ENCODE measurements at regions of chr10 and their contacts with region 1.

Region 1: DNA sequence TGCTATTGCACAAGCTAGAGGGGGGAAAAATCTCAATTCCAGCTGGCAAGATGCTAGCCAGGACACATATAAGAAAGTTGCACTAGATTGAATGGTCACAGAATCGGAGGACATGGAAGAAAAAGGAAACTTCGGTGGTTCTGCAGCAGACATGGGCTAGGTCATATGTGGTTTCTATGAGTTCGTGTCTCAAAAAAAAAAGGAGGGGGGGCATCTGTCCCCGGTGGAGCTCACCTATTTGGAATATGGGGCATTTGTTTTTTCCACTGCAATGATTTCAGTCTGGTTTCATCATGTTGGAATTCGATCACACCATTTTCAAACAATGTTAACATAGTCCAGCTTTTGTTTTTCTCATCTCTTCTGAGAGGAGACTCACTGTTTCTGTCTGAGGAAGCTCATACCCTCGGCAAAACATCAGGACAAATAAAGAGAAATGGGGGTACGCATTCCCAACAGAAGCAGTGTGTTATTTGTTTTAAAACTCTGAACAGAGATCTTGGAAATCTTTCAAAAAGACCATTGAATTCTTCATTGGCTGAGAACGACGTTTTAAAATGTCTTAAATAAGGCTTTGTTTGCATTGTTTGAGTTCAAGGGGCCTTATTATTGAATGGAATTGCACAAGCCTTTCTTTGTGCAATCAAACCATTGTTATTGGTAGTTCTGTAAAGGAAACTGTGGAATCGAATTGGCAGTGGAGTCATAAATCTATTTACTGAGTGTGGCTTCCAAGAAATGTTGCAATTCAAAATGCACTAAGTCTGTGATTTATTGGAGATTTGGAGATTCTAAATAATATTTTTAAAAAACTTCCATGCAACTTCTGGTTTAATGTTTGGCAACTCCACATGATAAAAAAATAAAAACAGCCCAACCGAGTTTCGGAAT is 173.2 kb downstream of the RTKN2 start:
- DNase-seq: peak in 1 of 2 experiments; percentile 82
- H3K4me3 ChIP-seq: no peak overlapping the region
- H3K4me3 Mint-ChIP-seq: peak overlapping the region; percentile 35
- H3K27ac Mint-ChIP-seq: peak overlapping the region; percentile 88
- H3K4me1 ChIP-seq: peaks cover 84% of the 10 kb centered on the region
- H3K4me1 Mint-ChIP-seq: peaks cover 70% of the 10 kb centered on the region
- H3K27me3 ChIP-seq: no peaks in the 10 kb centered on the region
- H3K27me3 Mint-ChIP-seq: no peaks in the 10 kb centered on the region
- CTCF ChIP-seq: no peak

Region 2: DNA sequence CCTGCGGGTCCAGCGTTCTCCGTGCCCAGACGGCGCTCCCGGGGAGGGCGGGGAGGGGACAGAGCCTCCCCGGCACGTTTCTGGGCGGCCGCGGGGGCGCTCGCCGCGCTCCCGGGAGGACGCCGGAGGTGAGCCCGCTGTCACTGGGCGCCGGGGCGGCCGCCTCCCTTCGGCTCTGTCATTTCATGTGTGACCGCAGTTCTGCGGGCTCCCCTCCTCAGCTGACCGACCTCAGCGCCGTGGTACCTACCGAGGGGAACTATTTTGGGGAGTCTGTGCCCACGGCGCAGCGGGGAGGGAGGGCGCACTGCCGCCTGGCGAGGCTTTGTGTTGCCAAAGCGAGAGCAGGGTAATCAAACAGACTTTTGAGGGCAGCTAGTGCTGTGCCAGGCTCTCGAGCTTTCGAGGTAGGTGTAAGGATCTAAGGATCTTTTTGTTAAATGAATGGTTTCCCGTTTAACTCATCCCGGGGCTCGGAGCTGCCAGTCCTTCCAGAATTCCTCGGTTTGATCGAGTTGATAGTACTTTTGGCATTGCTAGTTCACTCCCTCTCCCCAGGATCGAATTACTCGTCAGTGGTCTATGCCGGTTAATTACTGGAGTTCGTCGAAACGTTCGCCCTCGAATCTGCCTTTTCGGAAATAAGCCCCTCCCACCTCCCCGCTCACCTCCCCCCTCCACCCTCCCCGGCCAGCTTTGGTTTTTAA is 192.1 kb before region 1 on chr10:
- CTCF ChIA-PET with region 1: no interaction called
- POLR2A ChIA-PET with region 1: interaction called, 5 read pairs
- intact Hi-C with region 1: loop called (anchors 1 kb)
- DNase-seq: peak in 1 of 2 experiments; percentile 84
- H3K4me3 ChIP-seq: peak overlapping the region; percentile 97
- H3K4me3 Mint-ChIP-seq: peak overlapping the region; percentile 89
- H3K27ac Mint-ChIP-seq: peak overlapping the region; percentile 99
- H3K4me1 ChIP-seq: peaks cover 57% of the 10 kb centered on the region
- H3K4me1 Mint-ChIP-seq: peaks cover 34% of the 10 kb centered on the region
- H3K27me3 ChIP-seq: no peaks in the 10 kb centered on the region
- H3K27me3 Mint-ChIP-seq: no peaks in the 10 kb centered on the region
- CTCF ChIP-seq: peak; percentile 14 to 16

Region 3: DNA sequence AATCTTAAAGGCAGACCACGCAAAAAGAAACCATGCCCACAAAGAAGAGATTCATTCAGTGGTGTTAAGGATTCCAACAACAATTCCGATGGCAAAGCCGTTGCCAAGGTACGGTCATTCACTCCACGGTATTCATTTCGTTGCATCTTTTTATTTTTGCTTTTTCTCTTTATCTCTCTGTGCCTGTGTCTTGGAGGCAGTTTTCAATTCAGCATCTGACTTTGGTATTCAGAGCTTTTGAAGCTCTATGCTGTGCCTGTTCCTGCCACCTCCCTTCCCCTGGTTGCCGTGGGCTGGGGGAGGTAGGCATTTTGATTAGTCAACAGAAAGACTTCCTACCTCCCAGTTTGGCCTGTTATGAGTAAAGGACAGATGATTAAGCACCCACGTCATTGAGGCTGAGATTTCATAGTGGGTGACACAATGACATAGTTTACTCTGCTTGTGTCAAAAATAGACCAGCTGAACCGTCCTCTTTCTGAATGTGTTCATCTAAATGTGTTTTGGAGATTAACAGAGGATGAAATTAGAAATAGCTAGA is 44.5 kb before region 1 on chr10:
- CTCF ChIA-PET with region 1: no interaction called
- POLR2A ChIA-PET with region 1: interaction called, 6 read pairs
- intact Hi-C with region 1: loop called (anchors 2 kb)
- DNase-seq: peak in 1 of 2 experiments; percentile 57
- H3K4me3 ChIP-seq: peak overlapping the region; percentile 36
- H3K4me3 Mint-ChIP-seq: peak overlapping the region; percentile 93
- H3K27ac Mint-ChIP-seq: peak overlapping the region; percentile 79
- H3K4me1 ChIP-seq: peaks cover 74% of the 10 kb centered on the region
- H3K4me1 Mint-ChIP-seq: peaks cover 82% of the 10 kb centered on the region
- H3K27me3 ChIP-seq: no peaks in the 10 kb centered on the region
- H3K27me3 Mint-ChIP-seq: no peaks in the 10 kb centered on the region
- CTCF ChIP-seq: no peak

Region 4: GRCh38 chr10:62082729-62083411 is 12.6 kb before region 1 on chr10:
- CTCF ChIA-PET with region 1: no interaction called
- POLR2A ChIA-PET with region 1: no interaction called
- intact Hi-C with region 1: no loop called
- DNase-seq: no peak
- H3K4me3 ChIP-seq: no peak overlapping the region
- H3K4me3 Mint-ChIP-seq: no peak overlapping the region
- H3K27ac Mint-ChIP-seq: peak overlapping the region; percentile 50
- H3K4me1 ChIP-seq: peaks cover 36% of the 10 kb centered on the region
- H3K4me1 Mint-ChIP-seq: peaks cover 43% of the 10 kb centered on the region
- H3K27me3 ChIP-seq: no peaks in the 10 kb centered on the region
- H3K27me3 Mint-ChIP-seq: no peaks in the 10 kb centered on the region
- CTCF ChIP-seq: no peak

Region 5: GRCh38 chr10:62183442-62183841 is 88.0 kb after region 1 on chr10:
- CTCF ChIA-PET with region 1: no interaction called
- POLR2A ChIA-PET with region 1: interaction called, 4 read pairs
- intact Hi-C with region 1: loop called (anchors 1 kb)
- DNase-seq: peak in 1 of 2 experiments; percentile 34
- H3K4me3 ChIP-seq: no peak overlapping the region
- H3K4me3 Mint-ChIP-seq: no peak overlapping the region
- H3K27ac Mint-ChIP-seq: no peak overlapping the region
- H3K4me1 ChIP-seq: peaks cover 29% of the 10 kb centered on the region
- H3K4me1 Mint-ChIP-seq: peaks cover 10% of the 10 kb centered on the region
- H3K27me3 ChIP-seq: no peaks in the 10 kb centered on the region
- H3K27me3 Mint-ChIP-seq: no peaks in the 10 kb centered on the region
- CTCF ChIP-seq: no peak

Region 6: DNA sequence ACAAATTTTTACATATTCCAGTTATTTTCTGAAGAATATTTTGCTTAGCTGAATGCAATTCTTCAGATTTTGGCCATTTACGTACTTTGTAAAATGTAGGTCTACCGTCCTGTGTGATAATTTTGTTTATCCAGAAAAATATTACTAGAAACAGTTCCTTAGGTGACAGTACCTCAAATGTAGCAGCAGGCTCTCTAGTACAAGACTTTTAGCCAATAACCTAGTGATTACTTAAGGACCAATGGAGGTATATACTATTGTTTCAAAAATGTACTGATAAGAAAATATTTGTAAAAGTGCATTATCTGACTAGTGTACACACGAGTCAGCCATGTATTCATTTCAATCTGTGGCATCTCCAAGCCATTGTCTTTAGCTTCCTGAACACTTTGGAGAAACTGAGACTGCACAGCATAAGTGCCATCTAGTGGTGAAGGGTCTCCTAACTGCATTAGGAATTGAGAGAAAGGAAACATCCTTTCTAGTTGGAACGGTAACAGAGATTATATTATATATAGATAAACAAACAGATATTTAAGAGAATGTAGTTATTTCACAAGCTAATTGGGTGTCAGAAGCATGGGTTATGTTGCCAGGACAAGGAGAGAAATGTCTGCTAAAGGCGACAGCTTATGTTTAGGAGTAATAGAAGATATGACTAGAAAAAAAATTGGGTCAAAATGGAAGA is 149.5 kb after region 1 on chr10:
- CTCF ChIA-PET with region 1: interaction called, 9 read pairs
- POLR2A ChIA-PET with region 1: interaction called, 4 read pairs
- intact Hi-C with region 1: loop called (anchors 2 kb)
- DNase-seq: peak; percentile 70 to 82
- H3K4me3 ChIP-seq: no peak overlapping the region
- H3K4me3 Mint-ChIP-seq: no peak overlapping the region
- H3K27ac Mint-ChIP-seq: peak overlapping the region; percentile 33
- H3K4me1 ChIP-seq: peaks cover 25% of the 10 kb centered on the region
- H3K4me1 Mint-ChIP-seq: peaks cover 39% of the 10 kb centered on the region
- H3K27me3 ChIP-seq: no peaks in the 10 kb centered on the region
- H3K27me3 Mint-ChIP-seq: no peaks in the 10 kb centered on the region
- CTCF ChIP-seq: peak; percentile 95 to 98

Measured in Caco-2 (cell line).